ENCODE measurements at regions of chr7 and their contacts with region 1.

Region 1: DNA sequence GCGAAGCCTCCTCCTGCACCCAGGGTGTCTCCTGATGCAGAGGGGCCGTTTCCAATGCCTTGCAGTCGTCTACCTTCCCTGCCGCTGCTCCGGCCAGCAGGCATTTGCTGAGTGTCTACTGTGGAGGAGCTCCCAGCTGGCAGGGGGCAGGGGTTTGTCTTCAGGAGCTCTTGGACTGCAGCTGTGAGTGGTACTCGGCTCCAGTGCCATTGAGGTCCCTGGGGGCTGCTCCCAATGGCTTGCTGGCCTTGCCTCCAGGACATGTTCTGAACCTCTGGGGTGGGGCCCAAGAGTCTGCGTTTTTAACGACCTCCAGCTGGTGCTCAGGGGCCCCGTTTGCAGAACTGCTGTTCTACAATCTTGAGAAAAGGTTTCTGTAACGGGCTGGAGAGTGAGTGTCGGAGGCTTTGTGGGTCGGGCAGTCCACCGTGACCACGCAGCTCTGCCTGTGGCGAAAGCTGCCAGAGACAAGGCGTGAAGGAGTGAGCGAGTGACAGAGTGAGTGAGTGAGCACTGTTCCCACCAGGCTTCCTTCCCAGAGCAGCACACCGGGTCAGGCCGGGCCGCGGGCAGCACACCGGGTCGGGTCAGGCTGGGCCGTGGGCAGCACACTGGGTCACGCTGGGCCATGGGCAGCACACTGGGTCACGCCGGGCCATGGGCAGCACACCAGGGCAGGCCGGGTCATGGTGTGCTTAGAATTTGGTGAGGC is 520.2 kb downstream of the PTPRN2 start:
- DNase-seq: no peak
- ATAC-seq: no peak
- H3K4me3 ChIP-seq: no peak overlapping the region
- H3K4me3 Mint-ChIP-seq: no peak overlapping the region
- H3K27ac ChIP-seq: no peak overlapping the region
- H3K27ac Mint-ChIP-seq: no peak overlapping the region
- H3K4me1 ChIP-seq: no peaks in the 10 kb centered on the region
- H3K4me1 Mint-ChIP-seq: no peaks in the 10 kb centered on the region
- H3K27me3 ChIP-seq: no peaks in the 10 kb centered on the region
- H3K27me3 Mint-ChIP-seq: no peaks in the 10 kb centered on the region
- CTCF ChIP-seq: no peak

Region 2: GRCh38 chr7:158133515-158134271 is 66.3 kb after region 1 on chr7:
- CTCF ChIA-PET with region 1: no interaction called
- POLR2A ChIA-PET with region 1: no interaction called
- intact Hi-C with region 1: loop called in 1 of 2 experiments (anchors 10 kb)
- DNase-seq: no peak
- ATAC-seq: no peak
- H3K4me3 ChIP-seq: no peak overlapping the region
- H3K4me3 Mint-ChIP-seq: no peak overlapping the region
- H3K27ac ChIP-seq: no peak overlapping the region
- H3K27ac Mint-ChIP-seq: no peak overlapping the region
- H3K4me1 ChIP-seq: no peaks in the 10 kb centered on the region
- H3K4me1 Mint-ChIP-seq: no peaks in the 10 kb centered on the region
- H3K27me3 ChIP-seq: no peaks in the 10 kb centered on the region
- H3K27me3 Mint-ChIP-seq: no peaks in the 10 kb centered on the region
- CTCF ChIP-seq: no peak

Measured in CD8-positive, alpha-beta T cell (primary cell).